Dorsolateral prefrontal cortex (tissue), 120 donors: ENCODE measurements at regions of chr7 and their contacts with region 1.

Region 1: GRCh38 chr7:116499168-116500077 is at the start of gene CAV2:
- DNase-seq: peak in 1 of 10 donors; percentile 45
- H3K4me3 ChIP-seq: peak within 1 kb of the TSS; percentile 45 to 84 (median 67)
- H3K27ac ChIP-seq: peak within 1 kb of the TSS in 48 of 59 donors; percentile 17 to 85 (median 64)
- H3K27me3 ChIP-seq: peaks cover 0 to 27% (median 7%) of the 10 kb centered on the region in 45 donors
- CTCF ChIP-seq: no peak
- total RNA-seq, gene CAV2: 5.1 to 23.4 (median 11.4) TPM

Region 2: GRCh38 chr7:116367221-116367813 is 132.1 kb before region 1 on chr7:
- intact Hi-C with region 1: no loop called
- DNase-seq: no peak
- H3K4me3 ChIP-seq: no peak overlapping the region
- H3K27ac ChIP-seq: no peak overlapping the region
- H3K27me3 ChIP-seq: no peaks in the 10 kb centered on the region
- CTCF ChIP-seq: no peak

Region 3: GRCh38 chr7:116426428-116427156 is 72.8 kb before region 1 on chr7:
- intact Hi-C with region 1: loop called in 1 of 2 experiments (anchors 10 kb)
- DNase-seq: no peak
- H3K4me3 ChIP-seq: no peak overlapping the region
- H3K27ac ChIP-seq: no peak overlapping the region
- H3K27me3 ChIP-seq: peaks cover 0 to 1% (median 0%) of the 10 kb centered on the region in 45 donors
- CTCF ChIP-seq: no peak

Region 4: DNA sequence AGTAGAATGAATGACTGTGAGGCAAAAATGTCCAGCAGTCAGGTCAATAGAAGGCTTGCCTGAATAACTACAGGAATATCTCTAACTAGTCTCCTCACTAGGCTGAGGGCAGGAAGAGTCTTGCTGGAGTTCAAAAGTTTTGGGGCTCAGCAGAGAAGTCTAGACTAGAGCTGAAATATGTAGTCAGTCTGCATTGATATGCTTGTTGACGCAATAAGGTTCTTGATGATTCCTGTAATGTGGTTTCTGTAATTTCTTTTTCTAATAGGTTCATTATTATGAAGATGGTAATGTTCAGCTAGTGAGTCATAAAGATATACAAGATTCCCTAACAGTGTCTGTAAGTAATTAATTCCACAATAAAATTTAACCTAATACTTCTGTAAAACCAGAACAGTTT is 412.4 kb after region 1 on chr7:
- intact Hi-C with region 1: no loop called
- DNase-seq: no peak
- H3K4me3 ChIP-seq: no peak overlapping the region
- H3K27ac ChIP-seq: no peak overlapping the region
- H3K27me3 ChIP-seq: no peaks in the 10 kb centered on the region
- CTCF ChIP-seq: no peak

Region 5: DNA sequence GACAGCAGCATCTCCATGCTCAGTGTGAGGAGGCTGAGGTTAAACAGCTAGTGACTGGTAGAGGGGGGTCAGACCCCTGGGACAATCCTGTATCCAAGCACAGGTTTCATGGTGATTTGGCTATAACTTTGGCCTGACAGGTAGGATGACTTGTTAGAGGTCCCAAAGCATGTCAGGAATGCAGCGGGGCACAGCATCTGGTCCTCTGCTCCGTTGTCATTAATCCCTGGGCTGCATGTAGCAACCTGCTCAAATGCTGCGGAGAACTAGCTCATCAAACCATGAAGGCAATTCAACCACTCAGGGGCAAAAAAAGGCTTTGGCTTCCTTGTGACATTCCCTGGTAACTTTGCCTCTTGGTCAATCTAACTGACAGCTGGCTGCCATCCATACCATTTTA is 796.6 kb after region 1 on chr7:
- intact Hi-C with region 1: no loop called
- DNase-seq: no peak
- H3K4me3 ChIP-seq: no peak overlapping the region
- H3K27ac ChIP-seq: no peak overlapping the region
- H3K27me3 ChIP-seq: no peaks in the 10 kb centered on the region
- CTCF ChIP-seq: no peak